ENCODE measurements at regions of chr5 and their contacts with region 1.

Region 1: DNA sequence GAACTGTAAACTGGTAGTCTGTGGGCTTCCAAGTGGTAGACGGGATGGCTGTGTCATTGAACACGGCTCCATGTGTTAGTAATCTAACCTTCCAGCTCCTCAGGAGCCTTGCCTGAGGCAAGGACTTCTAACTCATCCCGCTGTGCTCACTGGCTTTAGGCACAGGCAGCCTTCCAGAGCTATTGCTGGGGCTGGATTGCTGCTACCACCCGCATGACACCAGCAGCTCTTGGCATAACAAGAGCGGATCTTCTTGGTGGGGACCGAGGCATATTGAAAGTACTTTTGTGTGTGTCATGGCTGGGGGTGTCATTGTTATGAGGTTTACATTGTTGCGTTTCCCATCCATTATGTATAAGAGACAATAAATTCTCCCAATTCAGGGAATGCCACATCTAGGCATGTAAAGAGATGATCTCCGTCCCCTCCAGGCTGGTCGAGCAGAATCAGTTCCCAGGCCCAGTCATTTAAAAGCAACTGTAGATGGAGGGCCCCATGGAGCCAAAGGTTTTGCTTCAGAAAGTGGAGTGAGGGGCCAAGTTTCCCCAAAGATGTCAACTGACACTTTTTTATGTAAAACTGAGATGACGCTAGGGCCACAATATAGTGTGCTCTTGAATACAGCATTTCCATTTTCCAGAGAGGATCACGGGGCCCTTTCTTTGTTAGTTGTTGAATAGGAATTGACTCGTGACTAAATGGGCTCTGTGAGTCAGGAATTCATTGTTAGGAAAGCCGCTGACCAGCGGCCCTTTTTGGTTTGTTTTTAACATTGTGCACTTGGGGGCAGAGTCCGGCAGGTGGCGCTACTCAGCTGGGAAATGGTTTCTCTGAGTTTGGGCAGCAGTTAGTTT is 759.6 kb downstream of the TAF11L14 start:
- DNase-seq: peak; percentile 37
- ATAC-seq: peak in 1 of 2 donors; percentile 27

Region 2: GRCh38 chr5:18329328-18329727 is 64.5 kb before region 1 on chr5:
- intact Hi-C with region 1: no loop called
- DNase-seq: no peak
- ATAC-seq: no peak

Region 3: GRCh38 chr5:18699681-18700080 is 305.9 kb after region 1 on chr5:
- intact Hi-C with region 1: loop called in 1 of 2 experiments (anchors 10 kb)
- DNase-seq: no peak
- ATAC-seq: no peak

Measured in left cardiac atrium (tissue), 4 donors.